ENCODE measurements at regions of chr1 and their contacts with region 1.

Region 1: DNA sequence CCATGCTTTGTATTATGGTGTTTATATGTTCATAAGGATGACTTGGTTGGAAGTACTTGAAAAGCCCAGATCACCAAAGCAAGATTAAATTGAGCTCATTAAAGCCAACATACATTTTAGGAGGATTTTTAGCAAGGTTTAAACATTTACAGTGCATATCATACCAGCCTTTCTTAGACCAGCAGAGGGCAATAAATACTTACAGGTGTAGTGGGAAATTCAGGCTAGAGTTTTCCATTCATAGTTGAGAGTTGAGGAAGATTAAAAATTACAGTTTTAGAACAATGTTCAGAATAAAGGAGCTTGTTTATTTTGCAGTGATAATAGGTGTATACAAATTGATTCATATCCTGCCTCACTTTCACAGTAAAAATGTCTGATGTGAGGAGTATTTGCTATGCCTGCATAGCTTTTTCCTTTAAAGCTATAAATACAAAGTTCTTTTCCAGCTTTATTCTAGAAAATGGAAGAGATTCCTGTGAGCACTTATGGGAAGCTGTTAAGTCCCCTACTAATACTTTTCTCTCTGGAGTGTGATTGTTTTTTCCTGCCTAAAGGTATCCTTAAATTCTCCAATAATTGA is 35.3 kb downstream of the DTL start:
- DNase-seq: no peak

Region 2: DNA sequence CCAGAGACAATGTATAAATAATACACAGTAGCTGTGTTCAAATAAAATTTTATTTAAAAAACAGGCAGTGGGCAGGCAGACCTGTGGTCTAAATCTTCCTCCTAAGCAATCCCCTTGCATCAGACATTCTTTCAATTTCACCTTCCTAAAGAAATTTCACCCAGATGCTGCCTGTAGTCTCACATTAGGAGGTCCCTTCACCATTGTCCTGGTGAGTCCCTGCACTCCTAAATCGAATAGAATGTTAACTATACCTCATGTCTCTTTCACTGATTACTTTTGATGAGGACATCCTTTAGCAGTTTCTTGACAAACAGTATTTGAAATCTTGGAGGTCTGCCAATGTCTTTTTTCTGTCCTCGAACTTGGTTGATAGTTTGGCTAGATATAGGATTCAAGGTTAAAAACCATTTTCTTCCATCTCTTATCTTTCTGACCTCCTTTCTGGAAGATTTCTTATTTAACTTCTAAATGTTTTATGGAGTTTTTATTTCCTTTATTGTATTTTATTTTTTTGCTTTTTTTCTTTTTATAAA is 317.8 kb before region 1 on chr1:
- intact Hi-C with region 1: no loop called
- DNase-seq: no peak

Region 3: DNA sequence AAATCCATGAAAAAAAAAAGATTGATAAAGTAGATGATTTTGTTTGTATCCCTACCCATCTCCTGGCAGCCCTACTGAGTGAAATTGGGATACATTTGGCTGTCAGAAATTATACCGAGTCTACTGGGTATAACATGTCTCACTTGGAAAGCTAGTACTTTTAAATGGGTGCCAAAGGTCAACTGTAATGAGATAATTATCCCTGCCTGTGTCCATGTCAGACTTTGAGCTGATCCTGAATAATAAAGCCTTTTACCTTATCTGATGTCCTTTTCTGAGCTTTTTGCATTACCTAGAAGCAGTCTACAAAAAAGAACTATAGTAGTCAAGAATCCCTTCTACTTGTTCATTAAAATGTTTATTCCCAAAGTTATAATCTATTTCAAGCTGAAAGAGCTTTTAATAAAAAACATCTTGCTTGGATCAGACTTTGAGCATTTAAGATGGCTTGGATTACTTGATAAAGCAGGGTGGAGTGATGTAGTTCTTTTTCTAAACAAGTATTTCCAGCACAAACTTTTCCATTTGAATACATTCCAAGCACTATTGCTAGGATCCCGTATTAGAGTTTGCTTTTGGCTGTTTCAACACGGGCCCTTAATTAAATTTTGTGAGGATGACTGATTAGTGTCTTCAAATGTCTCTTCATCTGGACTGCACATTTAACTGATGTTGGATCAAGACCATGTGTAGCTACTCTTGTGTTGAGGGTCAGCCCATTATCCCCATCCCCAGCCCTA is 33.9 kb after region 1 on chr1:
- intact Hi-C with region 1: loop called (anchors 5 kb)
- DNase-seq: no peak

Region 4: DNA sequence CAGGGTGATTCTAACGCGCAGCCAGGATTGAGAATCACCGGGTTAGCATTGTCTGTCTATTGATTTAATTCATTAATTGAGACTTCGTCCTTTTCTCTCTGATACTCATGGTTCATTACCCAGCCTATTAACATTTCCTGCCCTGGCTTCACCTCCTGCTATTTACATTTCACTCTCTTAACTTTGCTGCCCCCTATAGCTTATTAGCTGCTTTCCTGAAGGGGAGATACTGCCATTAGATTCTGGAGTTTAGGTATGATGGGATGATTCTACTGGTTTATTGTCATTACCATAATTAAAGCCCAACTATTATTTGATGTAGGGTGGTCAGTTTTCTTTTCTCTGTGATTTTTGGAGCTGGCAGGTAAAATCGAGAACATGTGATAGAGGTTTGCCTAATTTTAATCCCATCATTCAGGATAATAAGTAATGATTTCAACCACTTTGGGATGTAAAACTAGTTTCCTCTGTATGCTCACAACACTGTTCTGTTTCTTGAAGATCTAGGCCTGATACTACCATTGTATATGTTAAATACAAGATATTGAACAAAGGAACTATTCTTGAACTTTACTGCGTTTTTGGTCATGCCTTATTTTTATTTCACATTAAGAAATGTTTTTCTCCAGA is 220.8 kb after region 1 on chr1:
- intact Hi-C with region 1: loop called (anchors 2 kb)
- DNase-seq: no peak

Region 5: GRCh38 chr1:212368073-212368484 is 297.3 kb after region 1 on chr1:
- intact Hi-C with region 1: loop called (anchors 2 kb)
- DNase-seq: no peak

Measured in cardiac septum (tissue), 1 donor.